Sigmoid colon (tissue), 7 donors: ENCODE measurements at regions of chr17 and their contacts with region 1.

Region 1: DNA sequence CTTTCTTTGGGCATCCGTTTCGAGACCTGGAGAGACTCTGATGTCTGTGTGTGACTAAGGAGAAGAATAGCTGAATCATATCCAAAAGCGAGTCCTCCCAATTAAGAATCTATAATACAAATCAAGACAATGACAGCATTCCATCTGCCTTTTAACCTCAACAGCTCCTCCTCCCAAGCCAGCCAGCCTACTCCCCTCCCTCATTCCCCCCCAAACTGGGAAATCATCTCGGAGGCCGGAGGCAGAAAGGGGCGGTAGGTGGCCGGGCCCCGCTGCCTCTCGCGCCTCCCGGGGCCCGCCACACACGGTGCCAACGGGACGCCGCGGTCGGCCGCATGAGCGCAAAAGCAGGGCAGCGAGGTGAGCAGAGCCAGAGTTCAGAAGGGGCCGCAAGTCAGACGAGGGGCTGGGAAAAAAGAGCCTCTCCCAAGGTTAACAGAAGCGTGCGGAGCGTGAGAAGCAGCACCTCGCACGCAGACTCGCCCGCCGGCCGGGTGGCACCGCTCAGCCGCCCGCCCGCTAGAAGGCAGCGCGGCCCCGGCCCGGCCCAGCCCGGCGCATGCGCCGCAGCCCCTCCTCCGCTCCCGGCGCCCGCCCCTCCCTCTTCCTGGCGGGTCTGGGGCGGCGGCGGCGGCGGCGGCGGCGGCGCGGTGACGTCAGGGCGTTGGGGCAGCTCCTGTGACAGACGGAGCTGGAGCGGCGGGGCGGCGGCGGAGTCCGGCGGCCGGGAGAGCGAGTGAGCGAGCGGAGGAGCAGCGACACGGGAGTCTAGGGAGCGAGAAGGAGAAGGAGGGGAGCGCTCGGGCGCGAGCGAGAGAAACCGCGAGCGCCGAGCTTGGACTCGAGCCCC is at the start of gene PAFAH1B1:
- DNase-seq: peak; percentile 94
- H3K4me3 ChIP-seq: peak within 1 kb of the TSS; percentile 70 to 98 (median 84)
- H3K27ac ChIP-seq: peak within 1 kb of the TSS; percentile 97 to 99 (median 99)
- H3K4me1 ChIP-seq: peaks cover 0 to 46% (median 40%) of the 10 kb centered on the region in 4 donors
- H3K27me3 ChIP-seq: no peaks in the 10 kb centered on the region
- CTCF ChIP-seq: no peak
- EP300 ChIP-seq: peak in 1 of 4 donors; percentile 5
- POLR2A ChIP-seq: peak; percentile 26 to 31
- total RNA-seq, gene PAFAH1B1: 97.6 to 139 (median 106) TPM

Region 2: DNA sequence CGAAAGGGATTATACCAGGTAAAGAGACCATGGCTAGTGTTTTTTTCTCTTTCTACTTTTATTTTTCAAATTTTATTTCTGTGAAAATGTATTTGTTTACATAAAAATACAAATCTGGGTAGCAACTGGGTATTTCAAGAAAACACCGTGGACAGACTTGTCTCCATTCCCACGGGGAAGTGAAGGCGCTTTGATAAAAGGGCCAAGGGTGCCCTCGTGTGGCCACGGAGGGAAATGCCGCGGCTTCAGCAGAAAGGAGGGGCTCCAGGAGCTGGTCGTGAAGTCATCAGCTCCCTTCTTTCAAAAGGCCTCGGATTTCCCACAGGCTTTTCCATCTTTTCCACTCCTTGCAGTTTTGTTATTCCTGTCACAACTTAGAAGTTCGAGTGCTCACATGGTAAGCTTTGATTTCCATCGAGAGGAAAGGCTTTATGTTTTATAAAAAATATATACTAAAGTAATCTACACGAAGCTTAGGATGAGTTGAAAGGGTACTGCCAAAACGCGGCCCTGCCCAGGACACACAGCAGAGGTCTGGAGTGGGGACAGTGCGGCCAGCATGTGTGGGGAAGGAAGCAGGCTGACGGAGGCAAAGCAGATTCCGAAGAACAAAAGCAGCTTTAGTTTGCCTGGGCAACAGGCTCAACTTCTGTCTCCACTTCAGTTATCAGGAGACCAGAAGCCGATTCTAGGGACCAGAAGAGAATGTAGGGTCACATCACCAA is 177.0 kb before region 1 on chr17:
- intact Hi-C with region 1: loop called (anchors 10 kb)
- DNase-seq: peak; percentile 96
- H3K4me3 ChIP-seq: no peak overlapping the region
- H3K27ac ChIP-seq: peak overlapping the region; percentile 39 to 80 (median 61)
- H3K4me1 ChIP-seq: peaks cover 0 to 49% (median 25%) of the 10 kb centered on the region in 4 donors
- H3K27me3 ChIP-seq: no peaks in the 10 kb centered on the region
- CTCF ChIP-seq: peak; percentile 93 to 97 (median 95)
- EP300 ChIP-seq: no peak
- POLR2A ChIP-seq: no peak

Region 3: DNA sequence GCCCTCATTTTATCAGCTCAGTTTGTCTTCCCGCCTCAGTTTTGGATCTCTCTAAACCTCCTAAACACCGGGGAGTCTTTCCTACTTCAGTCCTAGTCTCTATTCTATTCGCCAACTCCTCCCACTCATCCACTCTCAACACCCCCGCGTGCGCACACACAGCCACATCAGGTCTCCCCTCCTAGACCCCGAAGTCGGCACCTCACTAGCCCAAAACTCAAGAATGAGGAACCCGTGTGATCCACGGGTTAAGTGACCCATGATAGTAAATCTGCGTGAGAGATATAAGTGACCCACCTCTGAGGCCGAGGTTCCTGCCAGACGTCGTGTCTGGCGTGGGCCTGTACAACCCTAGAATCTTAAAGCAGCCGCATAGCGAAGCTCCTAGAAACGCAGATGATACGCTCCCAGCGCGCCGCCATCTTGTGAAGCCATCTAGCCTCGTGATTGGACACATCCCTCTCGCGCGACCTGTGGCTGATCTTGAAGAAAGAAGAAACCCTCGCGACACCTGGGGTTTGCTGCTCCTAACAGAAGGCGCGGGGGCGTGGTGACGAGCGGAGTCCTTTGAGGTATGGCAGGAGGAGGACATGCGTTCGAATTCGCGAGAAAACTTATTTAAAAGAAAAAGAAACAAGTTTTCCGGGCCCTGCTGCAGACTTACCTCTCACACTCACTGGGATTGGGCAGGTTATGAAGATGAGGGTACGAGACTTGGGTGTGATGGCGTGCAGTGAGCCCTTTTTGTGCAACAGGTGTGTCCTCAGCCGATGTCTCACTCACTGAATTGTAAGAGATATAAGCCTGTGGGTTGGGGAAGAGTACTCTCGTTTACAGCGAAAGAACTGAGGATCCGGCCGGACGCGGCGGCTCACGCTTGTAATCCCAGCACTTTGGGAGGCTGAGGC is 81.5 kb before region 1 on chr17 and contains the start of gene METTL16:
- intact Hi-C with region 1: loop called (anchors 2 kb)
- DNase-seq: peak; percentile 99
- H3K4me3 ChIP-seq: peak within 1 kb of the TSS; percentile 62 to 72 (median 67)
- H3K27ac ChIP-seq: peak within 1 kb of the TSS; percentile 89 to 93 (median 90)
- H3K4me1 ChIP-seq: peaks cover 0 to 34% (median 31%) of the 10 kb centered on the region in 4 donors
- H3K27me3 ChIP-seq: no peaks in the 10 kb centered on the region
- CTCF ChIP-seq: no peak
- EP300 ChIP-seq: no peak
- POLR2A ChIP-seq: peak; percentile 68 to 72
- total RNA-seq, gene METTL16: 18.3 to 33.2 (median 24.4) TPM

Region 4: DNA sequence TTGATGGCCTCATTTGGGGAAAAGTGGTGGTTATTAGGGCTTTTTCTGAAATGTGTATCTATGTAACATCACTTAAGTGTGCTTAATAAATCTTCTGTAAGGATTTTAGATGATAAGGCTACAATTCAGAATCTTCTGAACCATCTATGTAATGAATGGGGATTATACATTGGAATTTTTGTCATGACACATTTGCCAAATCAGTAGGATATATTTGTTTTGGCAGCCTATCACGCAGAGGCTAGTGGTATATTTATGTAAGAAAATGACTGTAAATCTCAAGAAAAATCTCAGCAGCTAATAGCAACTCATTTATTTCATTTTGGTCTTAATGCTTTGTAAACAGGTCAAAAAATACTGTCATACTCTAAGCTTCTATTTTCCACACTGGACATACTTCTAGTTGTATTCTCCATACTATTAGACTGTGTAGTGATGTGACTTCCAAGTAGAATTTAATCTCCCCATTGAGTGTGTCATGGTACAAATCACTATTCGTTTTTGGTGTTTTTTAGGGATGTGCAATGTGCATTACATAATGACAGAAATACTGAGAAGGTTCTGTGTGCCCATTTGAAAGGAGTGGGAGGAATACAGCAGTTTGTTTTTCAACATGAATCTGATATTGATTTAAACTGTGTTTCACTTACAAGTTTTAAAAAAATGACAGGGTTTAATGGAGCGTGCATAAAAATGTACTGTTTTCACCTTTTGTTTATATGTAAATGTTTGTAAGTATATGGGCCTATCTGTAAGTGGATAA is 89.2 kb after region 1 on chr17:
- intact Hi-C with region 1: loop called (anchors 2 kb)
- DNase-seq: no peak
- H3K4me3 ChIP-seq: no peak overlapping the region
- H3K27ac ChIP-seq: no peak overlapping the region
- H3K4me1 ChIP-seq: peaks cover 0 to 26% (median 17%) of the 10 kb centered on the region in 4 donors
- H3K27me3 ChIP-seq: no peaks in the 10 kb centered on the region
- CTCF ChIP-seq: no peak
- EP300 ChIP-seq: no peak
- POLR2A ChIP-seq: no peak

Region 5: GRCh38 chr17:2711601-2712299 is 118.6 kb after region 1 on chr17 and contains the start of gene CLUH:
- intact Hi-C with region 1: loop called (anchors 2 kb)
- DNase-seq: peak; percentile 98
- H3K4me3 ChIP-seq: peak within 1 kb of the TSS; percentile 70 to 98 (median 88)
- H3K27ac ChIP-seq: peak within 1 kb of the TSS; percentile 81 to 92 (median 85)
- H3K4me1 ChIP-seq: peaks cover 0 to 59% (median 52%) of the 10 kb centered on the region in 4 donors
- H3K27me3 ChIP-seq: no peaks in the 10 kb centered on the region
- CTCF ChIP-seq: no peak
- EP300 ChIP-seq: peak in 1 of 4 donors; percentile 66
- POLR2A ChIP-seq: peak; percentile 39 to 72
- total RNA-seq, gene CLUH: 26.3 to 70.9 (median 39.3) TPM

Region 6: DNA sequence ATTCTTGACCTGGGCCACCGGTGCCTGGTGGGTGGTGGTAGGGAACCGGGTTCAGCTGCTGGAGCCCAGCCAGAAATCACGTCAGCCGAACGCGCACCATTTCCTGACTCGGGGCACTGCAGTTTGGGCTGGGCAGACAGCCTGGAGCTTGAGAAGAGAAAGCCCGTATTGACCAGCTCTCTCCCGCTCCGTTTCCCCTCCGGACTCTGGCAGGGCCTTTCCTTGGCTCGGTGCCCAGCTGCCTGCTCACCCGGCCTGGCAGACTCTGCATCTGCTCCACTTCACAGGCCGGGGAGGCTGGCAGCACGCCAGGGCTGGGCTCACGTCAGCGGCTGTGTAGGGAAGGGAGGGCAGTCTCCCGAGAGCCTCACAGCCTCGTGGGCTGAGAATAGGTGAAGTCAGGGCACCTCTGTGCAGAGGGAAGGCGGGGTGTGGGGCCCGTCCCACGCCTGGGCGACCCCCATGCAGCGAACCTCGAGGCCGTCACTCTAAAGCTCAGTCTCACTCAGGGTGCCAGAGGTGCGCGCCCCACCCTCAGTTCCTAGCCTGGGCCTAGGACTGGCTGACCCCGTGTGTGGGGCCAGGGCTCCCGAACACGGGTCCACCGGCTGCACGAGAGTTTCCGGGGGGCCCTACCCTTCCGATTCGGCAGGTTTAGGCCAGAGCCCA is 411.1 kb after region 1 on chr17:
- intact Hi-C with region 1: loop called (anchors 10 kb)
- DNase-seq: peak; percentile 100
- H3K4me3 ChIP-seq: peak overlapping the region in 3 of 4 donors; percentile 31 to 39 (median 32)
- H3K27ac ChIP-seq: peak overlapping the region; percentile 79 to 91 (median 86)
- H3K4me1 ChIP-seq: peaks cover 0 to 30% (median 25%) of the 10 kb centered on the region in 4 donors
- H3K27me3 ChIP-seq: no peaks in the 10 kb centered on the region
- CTCF ChIP-seq: no peak
- EP300 ChIP-seq: peak; percentile 48 to 97 (median 92)
- POLR2A ChIP-seq: no peak